ENCODE measurements at regions of chr20 and their contacts with region 1.

Region 1: GRCh38 chr20:10427060-10427692 is 6.8 kb downstream of the MKKS start:
- DNase-seq: peak; percentile 57
- H3K4me3 Mint-ChIP-seq: no peak overlapping the region
- H3K27ac Mint-ChIP-seq: no peak overlapping the region
- H3K4me1 Mint-ChIP-seq: peaks cover 36% of the 10 kb centered on the region
- H3K27me3 Mint-ChIP-seq: no peaks in the 10 kb centered on the region

Region 2: GRCh38 chr20:9978397-9979004 is 448.7 kb before region 1 on chr20:
- CTCF ChIA-PET with region 1: interaction called, 20 read pairs
- POLR2A ChIA-PET with region 1: no interaction called
- DNase-seq: peak; percentile 32
- H3K4me3 Mint-ChIP-seq: no peak overlapping the region
- H3K27ac Mint-ChIP-seq: no peak overlapping the region
- H3K4me1 Mint-ChIP-seq: no peaks in the 10 kb centered on the region
- H3K27me3 Mint-ChIP-seq: peaks cover 6% of the 10 kb centered on the region

Region 3: GRCh38 chr20:10316582-10316981 is 110.6 kb before region 1 on chr20:
- CTCF ChIA-PET with region 1: interaction called, 24 read pairs
- POLR2A ChIA-PET with region 1: interaction called, 5 read pairs
- DNase-seq: peak; percentile 24
- H3K4me3 Mint-ChIP-seq: no peak overlapping the region
- H3K27ac Mint-ChIP-seq: no peak overlapping the region
- H3K4me1 Mint-ChIP-seq: peaks cover 3% of the 10 kb centered on the region
- H3K27me3 Mint-ChIP-seq: peaks cover 17% of the 10 kb centered on the region

Region 4: GRCh38 chr20:10412591-10413408 is 14.4 kb before region 1 on chr20:
- CTCF ChIA-PET with region 1: interaction called, 15 read pairs
- POLR2A ChIA-PET with region 1: no interaction called
- DNase-seq: no peak
- H3K4me3 Mint-ChIP-seq: no peak overlapping the region
- H3K27ac Mint-ChIP-seq: no peak overlapping the region
- H3K4me1 Mint-ChIP-seq: peaks cover 4% of the 10 kb centered on the region
- H3K27me3 Mint-ChIP-seq: no peaks in the 10 kb centered on the region

Measured in activated CD4-positive, alpha-beta memory T cell treated with anti-CD3 and anti-CD28 coated beads, Interleukin-2, amount 10 ng/mL, durations not matched to agents 7 days and 5 days (primary cell).